Body of pancreas (tissue), 4 donors: ENCODE measurements at regions of chr17 and their contacts with region 1.

Region 1: DNA sequence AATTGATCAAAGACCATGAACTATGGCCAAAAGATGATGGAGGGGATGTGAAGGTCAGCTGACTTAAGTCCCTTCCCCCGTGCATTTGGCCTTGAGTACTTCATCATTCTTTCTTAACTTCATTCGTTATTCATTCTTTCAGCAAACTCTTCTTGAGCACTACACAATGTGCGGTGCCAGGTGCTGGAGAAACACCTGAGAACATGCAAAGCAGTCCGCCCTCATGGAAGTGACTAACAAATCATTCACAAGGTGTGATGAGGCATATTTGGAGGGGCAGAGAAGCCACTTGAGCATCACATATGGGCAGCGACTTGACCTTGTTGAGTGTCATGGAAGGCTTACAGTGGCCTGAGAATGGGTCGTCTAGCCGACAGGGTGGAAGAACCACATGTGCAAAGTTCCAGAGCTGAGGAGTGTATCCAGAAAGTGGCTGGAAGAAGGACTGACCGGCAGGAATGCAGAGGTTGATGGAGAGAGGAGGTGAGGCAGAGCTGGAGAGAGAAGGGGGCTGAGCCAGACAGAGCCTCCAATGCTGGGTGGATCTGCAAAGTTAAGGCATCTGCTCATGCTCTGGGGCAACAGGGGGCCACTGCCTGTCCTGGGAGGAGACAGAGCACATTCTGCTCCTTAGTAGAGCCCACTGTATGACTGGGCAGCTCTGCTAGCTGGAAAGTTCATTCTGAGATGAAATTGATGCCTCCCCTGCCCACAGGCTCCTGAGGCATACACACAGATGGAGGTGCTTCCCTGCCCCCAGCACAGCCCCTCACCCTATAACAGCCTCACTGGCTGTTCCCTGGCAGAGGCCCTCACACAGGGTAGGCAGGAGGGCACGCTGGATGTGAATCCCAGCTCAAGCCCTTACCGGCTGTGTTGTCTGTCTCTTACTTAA is 25.0 kb upstream of the EIF1 start:
- DNase-seq: no peak
- ATAC-seq: no peak
- H3K4me3 ChIP-seq: no peak overlapping the region
- H3K27ac ChIP-seq: no peak overlapping the region
- H3K4me1 ChIP-seq: peaks cover 21% of the 10 kb centered on the region
- H3K27me3 ChIP-seq: no peaks in the 10 kb centered on the region
- CTCF ChIP-seq: no peak
- POLR2A ChIP-seq: no peak

Region 2: GRCh38 chr17:41548844-41549595 is 114.7 kb before region 1 on chr17:
- intact Hi-C with region 1: loop called (anchors 5 kb)
- DNase-seq: peak; percentile 83 to 89 (median 84)
- ATAC-seq: peak; percentile 87
- H3K4me3 ChIP-seq: no peak overlapping the region
- H3K27ac ChIP-seq: peak overlapping the region in 3 of 4 donors; percentile 39 to 65 (median 63)
- H3K4me1 ChIP-seq: peaks cover 23% of the 10 kb centered on the region
- H3K27me3 ChIP-seq: no peaks in the 10 kb centered on the region
- CTCF ChIP-seq: peak; percentile 77 to 92 (median 88)
- POLR2A ChIP-seq: no peak